Calu3 (cell line): ENCODE measurements at regions of chr5 and their contacts with region 1.

Region 1: GRCh38 chr5:127875235-127876021 is 172.2 kb downstream of the CCDC192 start:
- DNase-seq: peak; percentile 84
- H3K4me3 Mint-ChIP-seq: no peak overlapping the region
- H3K27ac Mint-ChIP-seq: no peak overlapping the region
- H3K4me1 Mint-ChIP-seq: peaks cover 18% of the 10 kb centered on the region
- H3K27me3 Mint-ChIP-seq: no peaks in the 10 kb centered on the region
- CTCF ChIP-seq: peak; percentile 42

Region 2: DNA sequence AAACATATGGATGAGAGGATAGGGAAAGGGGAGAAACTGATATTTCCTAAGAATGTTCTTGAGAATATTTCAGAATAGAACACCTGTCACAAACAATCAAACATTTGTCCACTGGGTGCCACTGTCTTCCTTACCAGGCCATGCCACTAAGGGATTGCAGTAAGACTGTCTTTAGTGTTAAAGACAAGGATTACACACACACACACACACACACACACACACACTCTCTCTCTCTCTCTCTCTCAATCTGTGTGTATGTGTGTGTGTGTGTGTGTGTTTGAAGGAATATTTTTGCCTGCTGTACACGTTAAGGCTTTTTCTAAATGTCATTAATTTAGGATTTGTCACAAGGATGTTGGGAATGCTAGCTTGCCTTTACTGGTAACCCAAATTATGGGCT is 117.9 kb before region 1 on chr5:
- CTCF ChIA-PET with region 1: interaction called, 12 read pairs
- intact Hi-C with region 1: loop called (anchors 1 kb)
- DNase-seq: peak; percentile 77
- H3K4me3 Mint-ChIP-seq: no peak overlapping the region
- H3K27ac Mint-ChIP-seq: peak overlapping the region; percentile 35
- H3K4me1 Mint-ChIP-seq: peaks cover 42% of the 10 kb centered on the region
- H3K27me3 Mint-ChIP-seq: no peaks in the 10 kb centered on the region
- CTCF ChIP-seq: peak; percentile 86

Region 3: DNA sequence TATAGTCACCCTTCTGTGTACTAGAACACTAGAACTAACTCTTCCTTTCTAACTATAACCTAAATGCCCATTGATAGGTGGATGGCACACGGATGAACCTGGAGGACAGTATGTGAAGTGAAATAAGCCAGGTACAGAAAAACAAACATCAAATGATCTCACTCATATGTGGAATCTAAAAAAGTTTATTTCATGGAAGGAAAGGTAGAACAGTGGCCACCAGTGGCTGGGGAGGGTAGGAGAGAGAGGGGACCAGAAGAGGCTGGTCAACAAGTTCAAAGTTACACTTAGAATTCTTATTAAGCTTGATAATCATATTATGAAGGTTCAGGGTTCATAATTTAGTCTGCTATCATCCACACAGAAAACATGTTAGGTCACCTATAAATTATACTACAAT is 100.5 kb after region 1 on chr5:
- CTCF ChIA-PET with region 1: no interaction called
- intact Hi-C with region 1: loop called (anchors 5 kb)
- DNase-seq: no peak
- H3K4me3 Mint-ChIP-seq: no peak overlapping the region
- H3K27ac Mint-ChIP-seq: no peak overlapping the region
- H3K4me1 Mint-ChIP-seq: peaks cover 42% of the 10 kb centered on the region
- H3K27me3 Mint-ChIP-seq: no peaks in the 10 kb centered on the region
- CTCF ChIP-seq: no peak

Region 4: GRCh38 chr5:128197896-128198522 is 322.6 kb after region 1 on chr5:
- CTCF ChIA-PET with region 1: no interaction called
- intact Hi-C with region 1: loop called (anchors 5 kb)
- DNase-seq: no peak
- H3K4me3 Mint-ChIP-seq: peak overlapping the region; percentile 48
- H3K27ac Mint-ChIP-seq: peak overlapping the region; percentile 78
- H3K4me1 Mint-ChIP-seq: peaks cover 45% of the 10 kb centered on the region
- H3K27me3 Mint-ChIP-seq: no peaks in the 10 kb centered on the region
- CTCF ChIP-seq: no peak